Pancreas (tissue), 10 donors: ENCODE measurements at regions of chr1 and their contacts with region 1.

Region 1: GRCh38 chr1:21368515-21369289 is 71.2 kb upstream of the NBPF3 start:
- DNase-seq: peak; percentile 70 to 90 (median 82)
- ATAC-seq: peak; percentile 87 to 97 (median 96)
- H3K4me3 ChIP-seq: no peak overlapping the region
- H3K27ac ChIP-seq: no peak overlapping the region
- H3K4me1 ChIP-seq: peaks cover 0 to 3% (median 2%) of the 10 kb centered on the region in 3 donors
- H3K27me3 ChIP-seq: no peaks in the 10 kb centered on the region
- CTCF ChIP-seq: peak; percentile 70 to 95 (median 93)

Region 2: GRCh38 chr1:21232044-21232443 is 136.7 kb before region 1 on chr1:
- intact Hi-C with region 1: loop called (anchors 5 to 10 kb)
- DNase-seq: peak in 2 of 6 donors; percentile 35 to 60
- ATAC-seq: peak; percentile 75 to 92 (median 85)
- H3K4me3 ChIP-seq: no peak overlapping the region
- H3K27ac ChIP-seq: no peak overlapping the region
- H3K4me1 ChIP-seq: peaks cover 0 to 2% (median 0%) of the 10 kb centered on the region in 3 donors
- H3K27me3 ChIP-seq: no peaks in the 10 kb centered on the region
- CTCF ChIP-seq: peak; percentile 44 to 78 (median 76)

Region 3: DNA sequence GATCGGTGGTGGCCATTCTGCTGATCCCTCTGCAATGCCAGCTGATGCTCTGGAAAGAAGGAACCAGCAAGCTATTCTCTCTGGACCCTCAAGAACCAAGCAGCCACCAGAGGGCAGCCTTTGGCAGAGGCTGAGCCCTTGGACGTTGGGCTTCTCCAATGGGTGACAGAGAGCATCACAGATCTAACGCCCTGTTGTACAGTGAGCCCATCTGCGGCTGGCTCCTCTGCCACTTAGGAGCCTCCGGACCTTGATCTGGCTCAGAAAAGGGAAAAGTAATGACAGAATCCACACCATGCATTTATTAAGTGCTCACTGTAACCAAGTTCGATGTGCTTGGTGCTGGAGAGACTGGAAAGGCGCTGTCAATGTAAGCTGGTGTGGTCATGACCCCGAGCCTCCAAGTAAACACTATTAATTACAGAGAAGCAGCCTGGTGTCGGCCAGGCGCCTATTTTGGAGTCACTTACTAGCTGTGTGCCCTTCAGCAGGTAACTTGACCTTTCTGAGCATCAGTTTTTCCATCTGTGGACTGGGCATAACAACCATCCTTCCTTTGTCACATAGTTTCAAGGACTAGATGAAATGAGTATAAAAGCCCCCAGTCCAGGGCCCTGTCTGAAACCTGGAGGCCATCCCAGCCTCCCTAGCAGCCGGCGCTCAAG is 113.3 kb before region 1 on chr1:
- intact Hi-C with region 1: loop called in 1 of 3 experiments (anchors 2 kb)
- DNase-seq: peak; percentile 77 to 94 (median 89)
- ATAC-seq: peak; percentile 17 to 76 (median 49)
- H3K4me3 ChIP-seq: no peak overlapping the region
- H3K27ac ChIP-seq: peak overlapping the region in 2 of 4 donors; percentile 92 to 95
- H3K4me1 ChIP-seq: peaks cover 34 to 36% (median 36%) of the 10 kb centered on the region in 3 donors
- H3K27me3 ChIP-seq: no peaks in the 10 kb centered on the region
- CTCF ChIP-seq: peak; percentile 64 to 75 (median 66)

Region 4: GRCh38 chr1:21451212-21451812 is 82.6 kb after region 1 on chr1:
- intact Hi-C with region 1: no loop called
- DNase-seq: no peak
- ATAC-seq: no peak
- H3K4me3 ChIP-seq: no peak overlapping the region
- H3K27ac ChIP-seq: no peak overlapping the region
- H3K4me1 ChIP-seq: no peaks in the 10 kb centered on the region
- H3K27me3 ChIP-seq: no peaks in the 10 kb centered on the region
- CTCF ChIP-seq: no peak

Region 5: GRCh38 chr1:21834094-21834493 is 465.4 kb after region 1 on chr1:
- intact Hi-C with region 1: no loop called
- DNase-seq: no peak
- ATAC-seq: no peak
- H3K4me3 ChIP-seq: no peak overlapping the region
- H3K27ac ChIP-seq: no peak overlapping the region
- H3K4me1 ChIP-seq: no peaks in the 10 kb centered on the region
- H3K27me3 ChIP-seq: no peaks in the 10 kb centered on the region
- CTCF ChIP-seq: no peak